ENCODE measurements at regions of chr11 and their contacts with region 1.

Region 1: DNA sequence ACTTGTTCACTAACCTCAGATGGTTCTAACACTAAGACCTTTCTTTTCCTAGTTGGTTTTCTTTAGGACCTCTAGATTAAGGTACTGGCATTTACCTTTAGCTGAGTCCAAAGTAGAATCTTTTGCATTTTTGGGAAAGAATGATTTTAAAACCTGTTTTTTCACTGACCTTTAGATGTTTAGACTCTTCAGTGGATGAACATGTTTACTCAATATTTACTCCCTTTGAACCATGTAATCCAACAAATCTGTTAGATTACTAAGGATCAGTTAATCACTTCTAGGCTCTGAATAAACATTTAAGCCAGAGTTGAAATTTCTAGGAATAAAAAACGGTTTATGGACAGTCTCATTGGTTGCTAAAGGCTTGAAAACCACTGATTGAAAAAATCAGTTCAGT is 6.2 kb downstream of the TMEM135 start:
- DNase-seq: no peak
- ATAC-seq: no peak

Region 2: DNA sequence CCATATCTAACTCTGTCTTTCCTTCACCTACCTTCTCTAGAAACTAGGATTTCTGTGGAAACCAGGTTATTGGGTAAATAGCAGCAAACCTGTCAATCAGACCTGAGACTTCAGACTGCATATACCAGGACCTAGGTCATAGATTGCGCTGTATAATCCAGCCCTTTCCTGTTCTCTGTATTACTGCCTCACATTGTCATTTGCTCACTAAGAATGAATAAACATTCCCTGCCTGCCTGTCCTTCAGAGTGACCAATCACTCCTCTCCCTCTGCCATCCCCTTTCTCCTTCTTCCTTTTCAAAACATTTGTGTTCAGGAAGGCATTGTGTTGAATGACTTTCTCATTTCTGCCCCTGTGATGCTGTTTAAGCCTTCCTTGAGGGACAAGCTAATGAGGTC is 74.6 kb before region 1 on chr11:
- intact Hi-C with region 1: no loop called
- DNase-seq: no peak
- ATAC-seq: no peak

Region 3: DNA sequence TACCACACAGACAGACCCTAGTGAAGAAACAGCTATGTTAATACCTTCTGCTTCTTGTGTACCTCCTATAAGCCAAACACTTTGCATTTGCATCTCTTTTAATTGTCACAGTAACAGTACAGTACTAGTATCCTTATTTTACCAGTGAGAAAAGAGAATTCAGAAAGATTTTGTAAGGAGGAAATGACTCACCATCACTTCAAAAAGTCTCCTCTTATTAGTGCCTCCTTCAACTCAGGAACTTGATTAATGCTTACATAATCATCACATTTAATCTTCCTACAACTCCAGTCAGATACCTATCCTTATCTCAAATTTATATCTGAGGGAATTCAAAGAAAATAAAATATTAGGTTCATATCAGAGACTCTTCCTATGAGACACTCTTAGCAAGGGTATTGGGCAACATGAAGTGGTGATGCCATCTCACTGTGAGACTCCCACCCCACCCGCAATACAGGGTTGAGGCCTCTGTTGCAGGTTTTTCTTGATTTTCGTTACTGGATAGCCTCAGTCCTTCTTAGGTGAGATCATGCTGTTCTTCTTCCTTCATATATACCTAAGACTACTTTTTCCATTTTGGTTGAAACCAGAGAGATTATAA is 1319.8 kb after region 1 on chr11:
- intact Hi-C with region 1: loop called (anchors 10 kb)
- DNase-seq: no peak
- ATAC-seq: no peak

Measured in sciatic nerve (tissue), 2 donors.